Activated CD4-positive, alpha-beta T cell treated with anti-CD3 and anti-CD28 coated beads for 36 hours (primary cell): ENCODE measurements at regions of chr1 and their contacts with region 1.

Region 1: GRCh38 chr1:156020292-156021089 is at the start of gene SSR2:
- DNase-seq: peak; percentile 92
- ATAC-seq: peak; percentile 100
- H3K4me3 Mint-ChIP-seq: peak within 1 kb of the TSS; percentile 94
- H3K27ac Mint-ChIP-seq: peak within 1 kb of the TSS; percentile 96
- H3K4me1 Mint-ChIP-seq: peaks cover 20% of the 10 kb centered on the region
- H3K27me3 Mint-ChIP-seq: peaks cover 4% of the 10 kb centered on the region
- total RNA-seq, gene SSR2: 143 to 197 TPM

Region 2: DNA sequence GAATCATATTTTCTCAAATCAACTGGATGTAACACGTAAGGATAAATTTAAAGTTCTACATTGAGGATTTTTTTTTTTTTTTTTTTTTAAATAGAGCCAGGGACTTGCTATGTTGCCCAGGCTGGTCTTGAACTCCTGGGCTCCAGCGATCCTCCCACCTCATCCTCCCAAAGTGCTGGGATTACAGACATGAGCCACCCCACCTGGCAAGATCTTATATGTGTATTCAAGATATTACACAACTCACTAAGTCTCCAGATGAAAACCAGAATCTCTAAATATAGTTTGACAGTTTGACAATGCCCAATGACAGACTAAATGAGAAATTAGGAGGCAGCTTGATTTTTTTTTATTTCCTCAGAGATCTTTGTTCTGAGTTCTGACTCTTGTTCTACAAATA is 338.7 kb before region 1 on chr1:
- CTCF ChIA-PET with region 1: no interaction called
- POLR2A ChIA-PET with region 1: no interaction called
- intact Hi-C with region 1: no loop called
- DNase-seq: no peak
- ATAC-seq: no peak
- H3K4me3 Mint-ChIP-seq: no peak overlapping the region
- H3K27ac Mint-ChIP-seq: no peak overlapping the region
- H3K4me1 Mint-ChIP-seq: peaks cover 43% of the 10 kb centered on the region
- H3K27me3 Mint-ChIP-seq: no peaks in the 10 kb centered on the region

Region 3: DNA sequence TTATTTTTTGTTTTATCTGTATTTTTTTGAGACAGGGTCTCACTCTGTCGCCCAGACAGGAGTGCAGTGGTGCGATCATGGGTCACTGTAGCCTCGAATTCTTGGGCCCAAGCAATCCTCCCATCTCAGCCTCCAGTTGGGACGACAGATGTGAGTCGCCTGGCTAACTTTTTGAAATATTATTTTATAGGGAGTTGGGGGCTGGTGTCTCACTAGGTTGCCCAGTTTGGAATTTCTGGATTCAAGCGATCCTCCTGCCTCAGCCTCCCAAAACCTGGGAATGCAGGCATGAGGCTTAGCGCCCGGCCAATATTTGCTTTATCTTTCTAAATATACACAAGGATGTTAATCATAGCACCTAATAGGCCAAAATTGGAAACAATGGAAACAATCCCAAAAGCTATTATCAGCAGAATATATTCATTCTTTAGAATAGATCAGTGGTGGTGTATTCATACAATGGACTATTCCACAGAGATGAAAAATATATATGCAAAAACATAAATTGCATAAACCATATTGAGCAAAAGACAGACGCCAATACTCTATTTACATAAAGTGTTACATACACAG is 275.7 kb before region 1 on chr1:
- CTCF ChIA-PET with region 1: interaction called, 3 read pairs
- POLR2A ChIA-PET with region 1: no interaction called
- intact Hi-C with region 1: loop called in 1 of 2 experiments (anchors 2 kb)
- DNase-seq: no peak
- ATAC-seq: no peak
- H3K4me3 Mint-ChIP-seq: peak overlapping the region; percentile 90
- H3K27ac Mint-ChIP-seq: peak overlapping the region; percentile 78
- H3K4me1 Mint-ChIP-seq: peaks cover 4% of the 10 kb centered on the region
- H3K27me3 Mint-ChIP-seq: no peaks in the 10 kb centered on the region

Region 4: GRCh38 chr1:156065212-156065611 is 44.7 kb after region 1 on chr1:
- CTCF ChIA-PET with region 1: interaction called, 19 read pairs
- POLR2A ChIA-PET with region 1: no interaction called
- intact Hi-C with region 1: loop called in 1 of 2 experiments (anchors 1 kb)
- DNase-seq: peak; percentile 21
- ATAC-seq: peak; percentile 29
- H3K4me3 Mint-ChIP-seq: no peak overlapping the region
- H3K27ac Mint-ChIP-seq: no peak overlapping the region
- H3K4me1 Mint-ChIP-seq: peaks cover 14% of the 10 kb centered on the region
- H3K27me3 Mint-ChIP-seq: no peaks in the 10 kb centered on the region

Region 5: GRCh38 chr1:156082309-156083091 is 62.0 kb after region 1 on chr1 and contains the start of gene MEX3A:
- CTCF ChIA-PET with region 1: no interaction called
- POLR2A ChIA-PET with region 1: no interaction called
- intact Hi-C with region 1: loop called in 1 of 2 experiments (anchors 1 kb)
- DNase-seq: peak; percentile 80
- ATAC-seq: peak; percentile 89
- H3K4me3 Mint-ChIP-seq: peak within 1 kb of the TSS; percentile 72
- H3K27ac Mint-ChIP-seq: no peak within 1 kb of the TSS
- H3K4me1 Mint-ChIP-seq: peaks cover 5% of the 10 kb centered on the region
- H3K27me3 Mint-ChIP-seq: peaks cover 26% of the 10 kb centered on the region
- total RNA-seq, gene MEX3A: 0.48 to 0.79 TPM

Region 6: GRCh38 chr1:156146020-156146768 is 125.7 kb after region 1 on chr1:
- CTCF ChIA-PET with region 1: no interaction called
- POLR2A ChIA-PET with region 1: no interaction called
- intact Hi-C with region 1: no loop called
- DNase-seq: peak; percentile 67
- ATAC-seq: peak; percentile 82
- H3K4me3 Mint-ChIP-seq: peak overlapping the region; percentile 37
- H3K27ac Mint-ChIP-seq: peak overlapping the region; percentile 85
- H3K4me1 Mint-ChIP-seq: peaks cover 46% of the 10 kb centered on the region
- H3K27me3 Mint-ChIP-seq: no peaks in the 10 kb centered on the region

Region 7: GRCh38 chr1:156193488-156194299 is 173.2 kb after region 1 on chr1 and contains the start of gene SLC25A44:
- CTCF ChIA-PET with region 1: no interaction called
- POLR2A ChIA-PET with region 1: no interaction called
- intact Hi-C with region 1: loop called in 1 of 2 experiments (anchors 1 kb)
- DNase-seq: peak; percentile 98
- ATAC-seq: peak; percentile 96
- H3K4me3 Mint-ChIP-seq: peak within 1 kb of the TSS; percentile 100
- H3K27ac Mint-ChIP-seq: peak within 1 kb of the TSS; percentile 97
- H3K4me1 Mint-ChIP-seq: peaks cover 43% of the 10 kb centered on the region
- H3K27me3 Mint-ChIP-seq: no peaks in the 10 kb centered on the region
- total RNA-seq, gene SLC25A44: 42.4 to 51.9 TPM